Posterior cingulate gyrus (tissue), 11 donors: ENCODE measurements at regions of chr10 and their contacts with region 1.

Region 1: DNA sequence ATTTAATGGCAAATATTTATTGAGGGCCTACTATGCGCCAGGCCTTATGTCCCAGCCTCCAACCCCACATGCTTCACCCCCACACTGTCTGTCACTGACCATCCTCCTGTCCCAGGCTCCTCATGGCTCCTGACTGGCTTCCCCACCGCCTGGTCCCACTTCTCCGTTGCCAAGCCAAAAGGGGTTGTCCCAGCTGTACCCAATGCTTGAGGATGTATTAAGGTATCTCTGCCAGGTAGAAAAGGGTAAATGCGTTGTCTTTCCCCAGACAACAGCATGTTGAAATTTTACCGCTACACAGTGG is 168.8 kb upstream of the FRMD4A start:
- DNase-seq: no peak

Region 2: GRCh38 chr10:14414901-14415300 is 84.7 kb before region 1 on chr10:
- intact Hi-C with region 1: no loop called
- DNase-seq: no peak

Region 3: GRCh38 chr10:14543046-14543903 is 43.7 kb after region 1 on chr10:
- intact Hi-C with region 1: loop called (anchors 5 kb)
- DNase-seq: peak in 1 of 10 donors; percentile 66

Region 4: DNA sequence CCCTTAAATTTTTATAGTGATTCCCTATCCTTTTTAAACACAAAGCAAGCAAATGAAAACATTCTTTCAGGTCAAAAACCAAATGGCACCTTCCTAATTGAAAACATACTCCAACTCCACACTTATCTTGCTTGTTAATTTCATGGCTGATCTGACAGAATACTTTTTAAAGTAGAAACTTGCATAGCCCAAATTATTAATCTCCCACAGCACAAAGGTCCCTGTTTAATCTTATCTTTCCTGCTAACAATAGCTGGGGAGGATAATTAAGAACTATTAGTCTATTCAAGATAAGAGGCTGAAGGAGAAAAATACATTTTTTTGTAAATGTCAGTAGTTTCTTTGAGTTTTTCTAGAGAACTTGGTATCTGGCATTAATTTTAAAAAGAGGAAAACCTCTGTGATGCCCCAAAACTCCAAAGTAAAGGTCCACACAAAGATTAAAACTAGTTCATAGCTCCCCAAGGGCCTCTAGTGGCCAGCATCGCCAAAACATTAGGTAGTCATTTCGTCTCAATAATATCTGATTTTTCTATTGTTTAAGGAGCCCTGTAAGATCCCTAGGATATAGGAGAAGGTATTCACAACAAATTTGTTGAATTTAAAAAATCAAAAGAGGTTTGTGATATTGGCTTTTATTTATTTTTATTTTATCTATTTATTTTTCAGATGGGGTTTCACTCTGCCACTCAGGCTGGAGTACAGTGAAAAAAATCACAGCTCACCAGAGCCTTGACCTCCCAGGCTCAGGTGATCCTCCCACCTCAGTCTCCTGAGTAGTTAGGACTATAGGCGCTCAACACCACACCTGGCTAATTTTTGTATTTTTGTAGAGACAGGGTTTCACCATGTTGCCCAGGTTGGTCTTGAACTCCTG is 323.6 kb after region 1 on chr10:
- intact Hi-C with region 1: loop called (anchors 1 kb)
- DNase-seq: peak in 3 of 10 donors; percentile 15 to 40 (median 27)

Region 5: GRCh38 chr10:14837757-14838581 is 338.4 kb after region 1 on chr10 and contains the starts of genes CDNF, HSPA14 and MSANTD7:
- intact Hi-C with region 1: loop called (anchors 5 kb)
- DNase-seq: peak; percentile 98 to 100 (median 99)

Region 6: GRCh38 chr10:14911801-14912200 is 412.2 kb after region 1 on chr10:
- intact Hi-C with region 1: no loop called
- DNase-seq: no peak